Endothelial cell of umbilical vein (primary cell): ENCODE measurements at regions of chr9 and their contacts with region 1.

Region 1: DNA sequence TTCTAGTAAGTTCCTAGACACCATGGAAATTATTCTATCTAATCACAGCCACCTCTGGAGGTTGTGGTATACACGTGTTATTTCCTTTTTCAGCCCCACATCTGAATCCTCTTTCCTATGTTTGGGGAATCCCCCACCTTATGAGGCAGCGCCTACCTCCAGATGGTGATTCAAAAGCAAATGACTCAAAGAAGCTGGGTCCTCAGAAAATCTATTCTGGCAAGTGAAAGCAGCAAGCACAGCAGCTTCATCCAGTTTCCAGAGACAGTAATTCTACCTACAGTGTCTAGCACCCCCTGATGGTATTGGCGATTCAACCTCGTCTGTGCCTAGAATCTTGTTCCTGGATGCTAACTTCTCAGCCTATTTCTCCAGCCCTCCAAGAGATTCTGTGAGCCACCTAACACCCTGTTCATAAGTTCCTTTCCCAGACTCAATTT is 43.0 kb downstream of the STRBP start:
- DNase-seq: peak; percentile 85
- H3K4me3 ChIP-seq: no peak overlapping the region
- H3K27ac ChIP-seq: no peak overlapping the region
- H3K4me1 ChIP-seq: peaks cover 2% of the 10 kb centered on the region
- H3K27me3 ChIP-seq: no peaks in the 10 kb centered on the region
- CTCF ChIP-seq: peak; percentile 60 to 73
- POLR2A ChIP-seq: no peak

Region 2: DNA sequence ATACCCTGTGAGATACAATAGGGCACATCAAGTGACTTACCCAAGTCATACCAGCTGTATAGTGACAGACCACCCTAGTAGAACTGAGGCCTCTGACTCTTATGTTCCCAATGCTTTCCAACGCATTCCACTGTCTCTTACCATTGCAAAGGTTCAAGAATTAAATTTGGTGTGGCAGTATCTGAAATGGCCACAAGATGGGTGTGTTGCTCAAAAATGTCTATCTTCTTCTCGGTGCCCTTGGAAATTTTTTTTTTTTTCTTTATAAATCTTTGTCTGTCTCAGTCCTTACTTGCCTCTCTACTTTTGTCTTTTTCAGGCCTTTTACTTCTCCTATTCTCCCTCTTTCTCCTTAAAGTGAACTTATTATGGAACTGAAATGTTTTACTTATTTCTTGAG is 143.6 kb before region 1 on chr9:
- CTCF ChIA-PET with region 1: interaction called, 100 read pairs
- POLR2A ChIA-PET with region 1: no interaction called
- dilution Hi-C with region 1: no loop called
- intact Hi-C with region 1: loop called (anchors 1 kb)
- DNase-seq: peak; percentile 76
- H3K4me3 ChIP-seq: no peak overlapping the region
- H3K27ac ChIP-seq: no peak overlapping the region
- H3K4me1 ChIP-seq: no peaks in the 10 kb centered on the region
- H3K27me3 ChIP-seq: no peaks in the 10 kb centered on the region
- CTCF ChIP-seq: peak; percentile 49 to 51
- POLR2A ChIP-seq: no peak

Region 3: DNA sequence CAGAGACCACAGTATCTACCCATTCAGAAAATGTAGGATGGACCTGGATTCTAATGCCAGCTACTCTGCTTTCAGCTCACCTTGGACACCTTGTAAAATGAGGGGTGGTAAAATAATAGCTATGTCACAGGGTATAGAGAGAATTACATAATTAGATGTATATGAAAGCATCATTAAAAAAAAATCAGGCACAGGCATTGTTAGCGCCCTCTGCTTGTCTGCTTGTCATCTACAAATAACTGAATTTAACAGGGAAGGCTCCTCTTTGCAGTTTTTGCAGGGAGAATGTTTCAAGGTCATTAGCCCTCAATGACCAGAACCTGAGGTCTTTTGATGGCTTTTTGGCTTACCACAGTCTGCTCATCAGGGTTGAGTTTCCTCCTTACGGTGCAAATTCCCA is 133.9 kb before region 1 on chr9:
- CTCF ChIA-PET with region 1: interaction called, 31 read pairs
- POLR2A ChIA-PET with region 1: no interaction called
- dilution Hi-C with region 1: no loop called
- intact Hi-C with region 1: no loop called
- DNase-seq: no peak
- H3K4me3 ChIP-seq: no peak overlapping the region
- H3K27ac ChIP-seq: no peak overlapping the region
- H3K4me1 ChIP-seq: no peaks in the 10 kb centered on the region
- H3K27me3 ChIP-seq: no peaks in the 10 kb centered on the region
- CTCF ChIP-seq: peak in 1 of 2 donors; percentile 24
- POLR2A ChIP-seq: no peak

Region 4: GRCh38 chr9:123102375-123103110 is 122.9 kb before region 1 on chr9:
- CTCF ChIA-PET with region 1: interaction called, 88 read pairs
- POLR2A ChIA-PET with region 1: no interaction called
- dilution Hi-C with region 1: no loop called
- intact Hi-C with region 1: loop called (anchors 1 kb)
- DNase-seq: peak; percentile 20
- H3K4me3 ChIP-seq: no peak overlapping the region
- H3K27ac ChIP-seq: no peak overlapping the region
- H3K4me1 ChIP-seq: no peaks in the 10 kb centered on the region
- H3K27me3 ChIP-seq: no peaks in the 10 kb centered on the region
- CTCF ChIP-seq: peak; percentile 6 to 18
- POLR2A ChIP-seq: no peak

Region 5: DNA sequence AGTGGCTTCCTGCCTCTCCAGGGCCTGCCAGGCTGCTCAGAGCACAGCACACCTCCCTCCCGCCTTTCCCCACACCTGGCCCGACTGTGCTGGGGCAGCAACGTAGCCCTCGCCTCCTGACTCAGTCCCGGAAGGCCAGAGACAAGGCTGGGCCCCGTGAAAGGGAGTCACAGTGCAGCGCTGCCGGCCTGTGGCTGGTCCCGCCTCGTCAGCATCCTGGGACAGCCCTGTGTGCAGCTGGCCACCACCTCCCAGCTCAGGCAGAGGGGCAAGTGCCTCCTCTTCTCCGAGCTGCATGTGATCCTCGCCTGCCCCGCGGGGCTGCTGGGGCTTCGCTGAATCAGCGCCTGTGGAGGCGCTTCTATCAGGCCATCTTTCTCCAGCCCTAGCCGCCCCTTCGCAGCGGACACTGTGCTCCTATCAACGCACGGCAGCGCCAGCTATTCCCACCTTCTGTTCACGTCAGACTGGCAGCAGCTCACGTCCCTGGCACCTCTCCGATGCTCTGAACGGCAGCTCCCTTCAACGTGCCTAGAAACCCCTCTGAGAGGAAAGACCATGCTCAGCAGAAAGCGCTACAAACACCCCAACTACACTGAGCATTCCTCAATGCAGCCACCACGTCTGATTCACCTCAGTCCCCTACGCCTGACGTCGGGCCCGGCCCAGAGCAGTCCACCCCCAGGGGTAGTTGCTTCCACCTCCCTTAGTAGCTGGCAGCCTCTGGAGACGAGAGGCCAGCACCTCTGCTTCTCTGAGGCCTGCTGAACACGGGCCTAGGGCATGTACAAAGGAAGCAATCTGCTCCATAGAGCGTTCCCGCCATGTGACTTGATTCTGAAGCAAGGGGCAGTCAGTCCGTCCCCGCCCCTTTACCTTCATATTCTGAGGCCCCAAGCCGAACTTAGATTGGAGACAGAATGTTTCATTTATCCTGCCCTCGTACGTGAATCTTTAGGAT is 113.1 kb before region 1 on chr9:
- CTCF ChIA-PET with region 1: interaction called, 15 read pairs
- POLR2A ChIA-PET with region 1: no interaction called
- dilution Hi-C with region 1: no loop called
- intact Hi-C with region 1: no loop called
- DNase-seq: no peak
- H3K4me3 ChIP-seq: no peak overlapping the region
- H3K27ac ChIP-seq: no peak overlapping the region
- H3K4me1 ChIP-seq: no peaks in the 10 kb centered on the region
- H3K27me3 ChIP-seq: no peaks in the 10 kb centered on the region
- CTCF ChIP-seq: no peak
- POLR2A ChIP-seq: no peak

Region 6: GRCh38 chr9:123120131-123120530 is 105.3 kb before region 1 on chr9:
- CTCF ChIA-PET with region 1: interaction called, 18 read pairs
- POLR2A ChIA-PET with region 1: no interaction called
- dilution Hi-C with region 1: no loop called
- intact Hi-C with region 1: no loop called
- DNase-seq: no peak
- H3K4me3 ChIP-seq: no peak overlapping the region
- H3K27ac ChIP-seq: no peak overlapping the region
- H3K4me1 ChIP-seq: no peaks in the 10 kb centered on the region
- H3K27me3 ChIP-seq: no peaks in the 10 kb centered on the region
- CTCF ChIP-seq: no peak
- POLR2A ChIP-seq: no peak

Region 7: GRCh38 chr9:123246534-123246933 is 21.1 kb after region 1 on chr9:
- CTCF ChIA-PET with region 1: interaction called, 10 read pairs
- POLR2A ChIA-PET with region 1: no interaction called
- dilution Hi-C with region 1: no loop called
- intact Hi-C with region 1: no loop called
- DNase-seq: peak; percentile 58
- H3K4me3 ChIP-seq: no peak overlapping the region
- H3K27ac ChIP-seq: no peak overlapping the region
- H3K4me1 ChIP-seq: peaks cover 5% of the 10 kb centered on the region
- H3K27me3 ChIP-seq: no peaks in the 10 kb centered on the region
- CTCF ChIP-seq: no peak
- POLR2A ChIP-seq: no peak